Heart right ventricle (tissue), 16 donors: ENCODE measurements at regions of chr19 and their contacts with region 1.

Region 1: GRCh38 chr19:6774821-6775707 is 2.6 kb downstream of the VAV1 start:
- DNase-seq: no peak
- ATAC-seq: peak in 1 of 8 donors; percentile 23
- H3K4me3 ChIP-seq: peak overlapping the region in 1 of 10 donors; percentile 12
- H3K27ac ChIP-seq: peak overlapping the region in 1 of 10 donors; percentile 47
- H3K4me1 ChIP-seq: peaks cover 0 to 23% (median 0%) of the 10 kb centered on the region in 9 donors
- H3K27me3 ChIP-seq: peaks cover 0 to 14% (median 0%) of the 10 kb centered on the region in 7 donors
- CTCF ChIP-seq: no peak

Region 2: DNA sequence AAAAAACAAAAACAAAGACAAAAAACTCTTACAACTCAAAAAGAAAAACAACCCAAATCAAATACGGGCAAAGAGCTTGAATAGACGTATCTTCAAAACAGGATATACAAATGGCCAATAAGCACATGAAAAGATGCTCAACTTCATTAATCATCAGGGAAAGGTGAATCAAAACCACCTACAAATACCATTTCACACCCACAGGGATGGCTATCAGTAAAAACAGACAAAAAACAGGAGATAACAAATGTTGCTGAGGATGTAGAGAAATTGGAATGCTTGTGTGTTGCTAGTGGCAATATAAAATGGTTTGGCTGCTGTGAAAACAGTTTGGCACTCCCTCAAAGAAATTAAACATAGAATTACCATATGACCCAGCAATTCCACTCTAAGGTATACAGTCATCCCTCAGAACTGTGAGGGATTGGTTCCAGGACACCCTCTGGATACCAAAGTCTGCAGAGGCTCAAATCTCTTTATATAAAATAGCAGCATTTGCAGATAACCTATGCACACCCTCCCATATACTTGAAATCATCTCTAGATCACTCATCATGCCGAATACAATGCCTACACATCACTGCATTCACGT is 524.9 kb before region 1 on chr19:
- intact Hi-C with region 1: no loop called
- DNase-seq: no peak
- ATAC-seq: no peak
- H3K4me3 ChIP-seq: no peak overlapping the region
- H3K27ac ChIP-seq: peak overlapping the region in 2 of 10 donors; percentile 45 to 69
- H3K4me1 ChIP-seq: peaks cover 0 to 42% (median 21%) of the 10 kb centered on the region in 9 donors
- H3K27me3 ChIP-seq: no peaks in the 10 kb centered on the region
- CTCF ChIP-seq: no peak

Region 3: DNA sequence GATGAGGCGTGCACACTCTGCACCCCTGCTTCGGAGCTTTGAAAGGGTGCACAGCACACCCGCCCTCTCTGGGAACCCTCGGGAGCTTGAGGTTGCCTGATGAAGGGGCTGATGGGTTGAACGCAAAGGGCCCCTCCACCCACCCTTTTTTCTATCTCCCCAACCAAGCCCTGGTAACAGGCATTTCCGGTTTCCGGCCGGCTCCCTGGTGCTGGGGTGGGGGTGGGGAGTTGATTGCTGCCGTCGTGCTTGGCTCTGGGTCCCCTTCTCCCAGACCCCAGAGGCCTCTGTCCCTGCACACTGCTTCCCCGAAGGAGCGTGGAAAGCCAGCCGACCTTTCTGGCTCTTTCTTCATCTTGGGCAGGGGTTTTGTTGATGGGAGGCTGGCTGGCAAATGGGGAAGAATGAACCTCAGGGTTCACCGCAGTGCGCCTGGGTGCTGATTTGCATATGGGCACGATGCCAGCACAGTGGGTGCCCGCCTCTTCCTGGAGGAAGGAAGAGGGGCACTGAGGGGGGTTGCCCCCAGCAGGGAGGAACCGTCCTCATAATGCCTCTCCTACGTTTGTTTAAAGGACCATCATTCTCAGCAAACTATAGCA is 26.5 kb after region 1 on chr19:
- intact Hi-C with region 1: no loop called
- DNase-seq: peak; percentile 57 to 63
- ATAC-seq: peak; percentile 76 to 89 (median 84)
- H3K4me3 ChIP-seq: peak overlapping the region in 8 of 10 donors; percentile 16 to 44 (median 25)
- H3K27ac ChIP-seq: peak overlapping the region in 4 of 10 donors; percentile 2 to 89 (median 33)
- H3K4me1 ChIP-seq: peaks cover 0 to 50% (median 7%) of the 10 kb centered on the region in 9 donors
- H3K27me3 ChIP-seq: peaks cover 5 to 51% (median 25%) of the 10 kb centered on the region in 7 donors
- CTCF ChIP-seq: no peak

Region 4: GRCh38 chr19:6821639-6822310 is 46.7 kb after region 1 on chr19:
- intact Hi-C with region 1: loop called in 1 of 10 experiments (anchors 1 kb)
- DNase-seq: no peak
- ATAC-seq: no peak
- H3K4me3 ChIP-seq: no peak overlapping the region
- H3K27ac ChIP-seq: no peak overlapping the region
- H3K4me1 ChIP-seq: no peaks in the 10 kb centered on the region
- H3K27me3 ChIP-seq: peaks cover 0 to 28% (median 6%) of the 10 kb centered on the region in 7 donors
- CTCF ChIP-seq: no peak

Region 5: DNA sequence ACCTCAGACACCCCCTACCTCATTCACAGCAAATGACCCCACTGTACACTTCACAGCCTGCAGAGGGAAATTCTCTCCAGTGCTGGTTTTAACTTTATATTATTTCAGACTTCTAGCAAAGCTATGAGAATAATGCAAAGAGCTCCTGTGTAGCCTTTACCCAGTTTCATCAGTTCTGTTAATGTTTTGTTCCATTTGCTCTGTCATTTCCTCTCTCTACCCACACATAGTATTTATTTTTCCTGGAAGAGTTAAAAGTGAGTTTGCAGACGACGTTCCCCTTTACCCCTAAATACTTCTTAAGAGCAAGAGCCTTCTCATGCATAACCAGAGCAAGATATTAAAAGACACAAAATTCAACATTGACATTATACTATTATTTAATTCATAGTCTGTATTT is 62.5 kb after region 1 on chr19:
- intact Hi-C with region 1: loop called in 1 of 10 experiments (anchors 5 kb)
- DNase-seq: no peak
- ATAC-seq: no peak
- H3K4me3 ChIP-seq: no peak overlapping the region
- H3K27ac ChIP-seq: no peak overlapping the region
- H3K4me1 ChIP-seq: no peaks in the 10 kb centered on the region
- H3K27me3 ChIP-seq: peaks cover 0 to 20% (median 6%) of the 10 kb centered on the region in 7 donors
- CTCF ChIP-seq: no peak